Body of pancreas (tissue), 4 donors: ENCODE measurements at regions of chr11 and their contacts with region 1.

Region 1: GRCh38 chr11:119481021-119481666 is 58.2 kb upstream of the THY1 start:
- DNase-seq: peak; percentile 87 to 88 (median 88)
- ATAC-seq: peak; percentile 86
- H3K4me3 ChIP-seq: no peak overlapping the region
- H3K27ac ChIP-seq: no peak overlapping the region
- H3K4me1 ChIP-seq: peaks cover 10% of the 10 kb centered on the region
- H3K27me3 ChIP-seq: no peaks in the 10 kb centered on the region
- CTCF ChIP-seq: peak; percentile 95 to 99 (median 97)
- POLR2A ChIP-seq: no peak

Region 2: GRCh38 chr11:120108154-120108865 is 627.2 kb after region 1 on chr11:
- intact Hi-C with region 1: loop called (anchors 5 kb)
- DNase-seq: peak; percentile 66 to 80 (median 75)
- ATAC-seq: peak; percentile 86
- H3K4me3 ChIP-seq: no peak overlapping the region
- H3K27ac ChIP-seq: no peak overlapping the region
- H3K4me1 ChIP-seq: no peaks in the 10 kb centered on the region
- H3K27me3 ChIP-seq: no peaks in the 10 kb centered on the region
- CTCF ChIP-seq: peak; percentile 95 to 100 (median 98)
- POLR2A ChIP-seq: no peak